B cell (primary cell): ENCODE measurements at regions of chr11 and their contacts with region 1.

Region 1: GRCh38 chr11:114262681-114263512 is 33.3 kb upstream of the NNMT start:
- DNase-seq: peak; percentile 64
- ATAC-seq: no peak
- H3K4me3 ChIP-seq: no peak overlapping the region
- H3K4me3 Mint-ChIP-seq: no peak overlapping the region
- H3K27ac ChIP-seq: no peak overlapping the region
- H3K27ac Mint-ChIP-seq: no peak overlapping the region
- H3K4me1 ChIP-seq: peaks cover 30 to 31% of the 10 kb centered on the region in 2 donors
- H3K4me1 Mint-ChIP-seq: peaks cover 29% of the 10 kb centered on the region
- H3K27me3 ChIP-seq: peaks cover 0 to 3% (median 1%) of the 10 kb centered on the region in 4 experiments
- H3K27me3 Mint-ChIP-seq: no peaks in the 10 kb centered on the region
- CTCF ChIP-seq: peak; percentile 76

Region 2: DNA sequence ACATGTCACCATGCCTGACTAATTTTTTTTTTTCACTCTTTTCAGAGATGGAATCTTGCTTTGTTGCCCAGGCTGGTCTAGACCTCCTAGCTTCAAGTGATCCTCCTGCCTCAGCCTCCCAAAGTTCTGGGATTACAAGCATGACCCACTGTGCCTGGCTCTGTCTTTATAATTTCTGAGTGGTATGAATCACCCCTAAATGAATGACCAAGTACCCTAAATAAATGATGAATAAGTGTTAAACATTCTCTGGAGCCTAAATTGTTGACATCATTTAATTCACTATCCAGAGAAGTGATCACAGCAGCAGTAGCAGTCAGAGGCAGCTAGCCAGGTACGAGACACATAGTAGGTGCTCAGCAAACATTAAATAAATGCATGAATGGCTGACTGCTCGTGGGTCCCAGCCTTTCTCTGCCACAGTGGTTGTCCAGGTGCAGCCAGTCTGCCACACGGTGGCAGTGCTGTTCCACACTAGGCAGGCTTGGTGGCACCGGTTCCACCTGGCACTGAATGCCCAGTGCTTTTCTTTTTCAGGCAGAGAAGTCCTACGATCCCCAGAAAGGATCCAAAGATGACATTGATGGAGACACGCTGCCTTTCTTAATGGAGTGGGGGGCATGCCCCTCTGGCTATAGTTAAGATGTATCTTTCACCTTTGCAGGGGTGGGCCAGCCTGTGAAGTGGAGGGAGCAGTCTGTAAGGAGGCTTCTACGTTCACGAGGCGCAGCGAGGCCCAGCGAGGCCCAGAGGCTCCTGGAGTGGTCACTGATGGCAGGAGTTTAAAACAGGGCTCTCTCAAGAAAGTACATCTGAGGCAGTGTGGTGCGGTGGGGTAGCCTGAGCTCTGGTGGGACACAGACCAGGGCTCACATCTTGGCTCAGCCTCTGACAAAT is 957.2 kb before region 1 on chr11:
- CTCF ChIA-PET with region 1: interaction called, 39 read pairs
- POLR2A ChIA-PET with region 1: no interaction called
- intact Hi-C with region 1: loop called (anchors 1 kb)
- DNase-seq: peak; percentile 78
- ATAC-seq: peak; percentile 82
- H3K4me3 ChIP-seq: no peak overlapping the region
- H3K4me3 Mint-ChIP-seq: no peak overlapping the region
- H3K27ac ChIP-seq: no peak overlapping the region
- H3K27ac Mint-ChIP-seq: no peak overlapping the region
- H3K4me1 ChIP-seq: peaks cover 0 to 5% of the 10 kb centered on the region in 2 donors
- H3K4me1 Mint-ChIP-seq: no peaks in the 10 kb centered on the region
- H3K27me3 ChIP-seq: peaks cover 0 to 3% (median 0%) of the 10 kb centered on the region in 4 experiments
- H3K27me3 Mint-ChIP-seq: peaks cover 7% of the 10 kb centered on the region
- CTCF ChIP-seq: peak; percentile 98

Region 3: DNA sequence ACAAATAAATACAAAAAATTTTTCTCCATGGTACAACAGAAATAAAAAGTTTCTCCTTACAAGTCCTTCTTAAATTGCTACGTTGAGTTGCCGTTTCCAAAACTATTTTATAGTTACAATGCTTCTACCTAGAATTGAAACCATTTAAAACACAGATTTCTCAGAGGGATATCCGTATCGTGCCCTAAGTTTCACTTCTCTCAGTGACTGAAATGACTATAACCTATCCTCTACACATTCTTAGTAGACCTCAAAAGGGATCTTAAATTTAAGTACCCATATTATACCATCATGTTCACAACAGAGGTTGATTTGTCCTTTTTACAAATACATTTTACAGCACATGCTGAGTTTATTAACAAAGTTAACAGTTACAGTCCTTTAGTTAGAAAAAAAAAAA is 431.6 kb before region 1 on chr11:
- CTCF ChIA-PET with region 1: interaction called, 11 read pairs
- POLR2A ChIA-PET with region 1: no interaction called
- intact Hi-C with region 1: no loop called
- DNase-seq: peak; percentile 52
- ATAC-seq: peak; percentile 86
- H3K4me3 ChIP-seq: peak overlapping the region in 2 of 5 experiments; percentile 12 to 18
- H3K4me3 Mint-ChIP-seq: peak overlapping the region; percentile 78
- H3K27ac ChIP-seq: peak overlapping the region; percentile 36 to 65
- H3K27ac Mint-ChIP-seq: peak overlapping the region; percentile 86
- H3K4me1 ChIP-seq: peaks cover 15 to 19% of the 10 kb centered on the region in 2 donors
- H3K4me1 Mint-ChIP-seq: peaks cover 24% of the 10 kb centered on the region
- H3K27me3 ChIP-seq: no peaks in the 10 kb centered on the region
- H3K27me3 Mint-ChIP-seq: no peaks in the 10 kb centered on the region
- CTCF ChIP-seq: no peak

Region 4: GRCh38 chr11:113980785-113981184 is 282.1 kb before region 1 on chr11:
- CTCF ChIA-PET with region 1: interaction called, 55 read pairs
- POLR2A ChIA-PET with region 1: interaction called, 5 read pairs
- intact Hi-C with region 1: loop called (anchors 1 kb)
- DNase-seq: peak; percentile 53
- ATAC-seq: no peak
- H3K4me3 ChIP-seq: peak overlapping the region in 2 of 5 experiments; percentile 4 to 28
- H3K4me3 Mint-ChIP-seq: peak overlapping the region; percentile 62
- H3K27ac ChIP-seq: no peak overlapping the region
- H3K27ac Mint-ChIP-seq: peak overlapping the region; percentile 7
- H3K4me1 ChIP-seq: peaks cover 57 to 66% of the 10 kb centered on the region in 2 donors
- H3K4me1 Mint-ChIP-seq: peaks cover 63% of the 10 kb centered on the region
- H3K27me3 ChIP-seq: no peaks in the 10 kb centered on the region
- H3K27me3 Mint-ChIP-seq: no peaks in the 10 kb centered on the region
- CTCF ChIP-seq: no peak

Region 5: GRCh38 chr11:114044042-114044871 is 218.6 kb before region 1 on chr11:
- CTCF ChIA-PET with region 1: interaction called, 391 read pairs
- POLR2A ChIA-PET with region 1: no interaction called
- intact Hi-C with region 1: no loop called
- DNase-seq: no peak
- ATAC-seq: no peak
- H3K4me3 ChIP-seq: no peak overlapping the region
- H3K4me3 Mint-ChIP-seq: no peak overlapping the region
- H3K27ac ChIP-seq: no peak overlapping the region
- H3K27ac Mint-ChIP-seq: no peak overlapping the region
- H3K4me1 ChIP-seq: peaks cover 0 to 3% of the 10 kb centered on the region in 2 donors
- H3K4me1 Mint-ChIP-seq: peaks cover 7% of the 10 kb centered on the region
- H3K27me3 ChIP-seq: peaks cover 0 to 15% (median 0%) of the 10 kb centered on the region in 4 experiments
- H3K27me3 Mint-ChIP-seq: peaks cover 14% of the 10 kb centered on the region
- CTCF ChIP-seq: no peak

Region 6: DNA sequence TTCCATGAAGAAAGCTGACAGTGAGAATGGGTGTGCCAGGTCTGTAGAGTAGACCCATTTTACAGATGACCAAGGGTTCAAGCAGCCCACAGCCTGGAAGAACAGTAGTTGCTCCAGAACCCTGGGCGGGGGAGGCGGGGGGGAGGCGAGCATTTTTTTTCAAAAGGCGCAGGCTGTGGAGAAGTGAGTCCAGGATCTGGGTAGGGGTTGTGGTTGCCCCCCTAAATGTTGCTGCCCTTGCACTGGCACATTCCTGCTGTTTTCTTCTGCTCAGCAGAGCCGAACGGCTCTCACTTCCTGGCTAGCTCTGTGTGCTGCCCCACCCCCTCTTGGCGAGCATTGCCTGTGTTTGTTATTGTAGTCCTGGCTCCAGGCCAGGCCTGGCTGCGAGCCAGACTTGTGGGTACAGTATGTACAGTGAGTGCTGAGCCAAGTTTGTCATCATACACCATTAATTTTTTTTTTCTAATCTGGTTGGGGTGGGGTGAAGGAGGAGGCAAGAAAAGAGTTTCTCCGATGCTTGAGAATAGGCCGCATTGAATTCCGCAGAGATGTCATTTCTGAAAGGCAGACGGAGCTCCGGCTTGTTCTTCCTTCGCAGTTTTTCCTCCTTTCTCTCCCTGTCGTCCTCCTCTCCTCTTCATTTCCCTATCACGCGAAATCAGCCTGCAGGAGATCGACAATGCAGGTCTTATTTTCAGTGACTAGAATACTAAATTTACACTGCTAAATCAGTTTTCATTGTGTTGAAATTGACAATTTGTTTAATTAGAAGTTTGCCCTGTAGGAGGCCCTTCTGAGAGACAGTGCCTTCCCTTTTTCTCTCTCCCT is 102.9 kb before region 1 on chr11:
- CTCF ChIA-PET with region 1: interaction called, 100 read pairs
- POLR2A ChIA-PET with region 1: interaction called, 17 read pairs
- intact Hi-C with region 1: loop called (anchors 1 kb)
- DNase-seq: peak; percentile 98
- ATAC-seq: peak; percentile 93
- H3K4me3 ChIP-seq: peak overlapping the region; percentile 11 to 44 (median 24)
- H3K4me3 Mint-ChIP-seq: peak overlapping the region; percentile 73
- H3K27ac ChIP-seq: peak overlapping the region; percentile 81 to 85
- H3K27ac Mint-ChIP-seq: peak overlapping the region; percentile 90
- H3K4me1 ChIP-seq: peaks cover 68 to 69% of the 10 kb centered on the region in 2 donors
- H3K4me1 Mint-ChIP-seq: peaks cover 73% of the 10 kb centered on the region
- H3K27me3 ChIP-seq: no peaks in the 10 kb centered on the region
- H3K27me3 Mint-ChIP-seq: peaks cover 4% of the 10 kb centered on the region
- CTCF ChIP-seq: peak; percentile 33

Region 7: DNA sequence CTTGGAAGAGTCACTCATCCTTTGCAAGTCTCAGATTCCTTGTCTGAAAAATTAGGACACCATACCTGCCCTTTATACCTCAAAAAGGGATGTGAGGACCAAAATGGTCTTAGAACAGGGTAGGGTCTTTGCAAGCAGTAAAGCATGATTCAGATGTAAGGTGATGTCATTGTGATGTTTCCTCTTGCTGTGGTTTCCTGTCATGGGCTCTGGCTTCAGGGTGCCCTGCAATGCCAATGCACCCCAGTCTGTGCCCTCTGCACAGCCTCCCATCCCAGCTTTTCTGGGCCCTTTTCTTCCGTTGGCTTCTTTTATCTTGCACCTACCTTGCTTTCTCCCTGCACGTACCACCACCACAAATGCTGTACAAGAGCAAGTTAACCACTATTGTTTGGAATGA is 54.5 kb before region 1 on chr11:
- CTCF ChIA-PET with region 1: interaction called, 10 read pairs
- POLR2A ChIA-PET with region 1: no interaction called
- intact Hi-C with region 1: no loop called
- DNase-seq: peak; percentile 58
- ATAC-seq: peak; percentile 89
- H3K4me3 ChIP-seq: no peak overlapping the region
- H3K4me3 Mint-ChIP-seq: no peak overlapping the region
- H3K27ac ChIP-seq: no peak overlapping the region
- H3K27ac Mint-ChIP-seq: no peak overlapping the region
- H3K4me1 ChIP-seq: peaks cover 12 to 14% of the 10 kb centered on the region in 2 donors
- H3K4me1 Mint-ChIP-seq: peaks cover 15% of the 10 kb centered on the region
- H3K27me3 ChIP-seq: no peaks in the 10 kb centered on the region
- H3K27me3 Mint-ChIP-seq: peaks cover 3% of the 10 kb centered on the region
- CTCF ChIP-seq: no peak

Region 8: DNA sequence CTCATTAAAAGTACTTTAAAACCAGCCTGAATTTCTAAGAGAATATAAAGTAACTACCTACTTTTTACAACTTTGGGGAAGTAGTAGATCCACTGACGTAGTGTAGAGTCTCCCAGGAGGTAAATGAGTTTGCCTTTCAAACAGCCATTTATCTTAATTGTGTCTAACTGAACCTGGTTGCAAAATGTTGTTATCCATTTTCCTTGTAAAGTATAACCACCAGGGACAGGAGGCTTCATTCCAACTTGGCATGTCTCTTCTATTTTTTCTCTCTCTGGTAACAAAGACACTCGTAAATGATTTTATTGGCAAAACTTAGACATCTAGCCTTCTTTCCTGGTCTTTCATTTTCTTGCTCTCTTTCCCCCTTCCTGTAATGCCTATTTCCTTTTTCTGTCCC is 259.9 kb after region 1 on chr11:
- CTCF ChIA-PET with region 1: no interaction called
- POLR2A ChIA-PET with region 1: no interaction called
- intact Hi-C with region 1: no loop called
- DNase-seq: no peak
- ATAC-seq: no peak
- H3K4me3 ChIP-seq: no peak overlapping the region
- H3K4me3 Mint-ChIP-seq: no peak overlapping the region
- H3K27ac ChIP-seq: no peak overlapping the region
- H3K27ac Mint-ChIP-seq: no peak overlapping the region
- H3K4me1 ChIP-seq: no peaks in the 10 kb centered on the region
- H3K4me1 Mint-ChIP-seq: no peaks in the 10 kb centered on the region
- H3K27me3 ChIP-seq: no peaks in the 10 kb centered on the region
- H3K27me3 Mint-ChIP-seq: peaks cover 5% of the 10 kb centered on the region
- CTCF ChIP-seq: no peak